Head of caudate nucleus (tissue), 42 donors: ENCODE measurements at regions of chr9 and their contacts with region 1.

Region 1: DNA sequence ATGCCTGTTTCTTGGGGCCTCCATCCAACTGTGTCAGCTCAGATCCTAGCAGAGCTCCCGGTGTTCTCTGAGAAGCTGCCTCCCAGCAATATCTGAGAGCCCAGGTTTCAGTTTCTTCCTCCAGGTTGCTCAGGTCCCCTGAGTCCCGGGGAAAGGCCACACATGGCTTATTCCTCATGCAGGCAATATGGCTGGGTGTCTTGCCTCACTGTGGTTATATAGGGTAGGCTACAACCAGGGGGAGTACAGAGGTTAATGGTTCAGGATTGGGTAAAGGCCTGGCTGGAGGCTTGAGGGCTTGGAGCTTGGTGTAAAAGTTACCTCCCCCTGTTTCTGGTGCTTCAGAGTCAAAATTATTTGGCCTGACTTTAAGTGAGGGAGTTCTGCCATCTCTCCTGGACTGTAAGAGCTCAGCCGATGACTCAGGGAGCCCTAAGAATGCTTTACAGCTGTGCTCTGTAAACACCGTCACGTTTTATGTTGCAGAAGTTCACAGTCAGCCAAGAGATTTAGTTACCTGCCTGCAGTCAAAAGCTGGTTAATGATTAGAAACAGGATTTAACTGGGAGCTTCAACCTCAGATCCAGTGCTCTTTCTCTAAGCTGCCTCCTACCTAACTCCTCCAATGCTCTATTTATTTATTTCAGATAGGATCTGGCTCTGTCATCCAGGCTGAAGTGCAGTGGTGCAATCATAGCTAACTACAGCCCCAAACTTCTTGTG is 24.3 kb upstream of the UBAP2 start:
- DNase-seq: no peak

Region 2: DNA sequence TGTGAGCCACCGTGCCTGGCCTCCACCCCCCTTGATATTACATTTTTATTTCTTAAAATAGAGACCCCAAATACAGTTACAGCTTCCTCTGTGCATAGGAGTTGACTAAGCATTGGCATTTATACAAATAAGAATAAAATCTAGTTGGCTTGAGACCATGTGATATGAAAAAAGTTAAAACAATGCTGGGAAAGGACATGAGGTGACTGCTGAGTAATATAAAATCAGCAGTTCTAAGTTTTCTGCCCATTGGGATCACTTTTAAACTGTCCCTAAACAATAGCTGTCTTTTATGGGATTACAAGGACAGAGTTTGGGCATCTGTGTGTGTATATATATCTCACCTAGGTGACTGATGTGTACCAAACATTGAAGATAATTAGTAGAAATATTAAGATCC is 159.5 kb before region 1 on chr9:
- intact Hi-C with region 1: no loop called
- DNase-seq: no peak

Region 3: GRCh38 chr9:33924978-33925797 is 147.8 kb before region 1 on chr9:
- intact Hi-C with region 1: loop called (anchors 10 kb)
- DNase-seq: peak; percentile 39 to 90 (median 76)